AG04450 (cell line): ENCODE measurements at regions of chr1 and their contacts with region 1.

Region 1: DNA sequence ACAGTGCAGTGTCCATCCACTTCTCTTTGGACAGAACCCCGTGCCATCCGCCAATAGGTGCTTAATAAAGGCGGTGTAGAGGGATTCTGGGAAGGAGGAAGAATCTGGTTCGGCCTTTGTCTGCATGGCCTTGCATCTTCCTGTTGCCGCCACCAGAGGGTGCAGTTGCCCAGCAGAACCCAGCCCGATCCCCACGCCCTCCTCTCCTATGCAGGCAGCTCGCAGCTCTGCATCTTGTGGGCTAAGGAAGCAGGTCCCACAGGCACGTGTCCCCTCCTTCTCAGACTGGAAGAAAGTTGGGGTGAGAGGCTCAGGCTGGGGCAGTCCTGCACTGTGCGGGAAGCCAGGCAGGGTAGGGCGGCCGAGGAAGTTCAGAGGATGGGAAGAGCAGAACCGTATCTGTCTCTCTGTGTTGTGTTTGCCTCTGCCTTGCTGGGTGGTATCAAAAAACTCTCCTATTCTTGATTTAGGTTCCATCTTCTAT is 20.8 kb downstream of the NAV1 start:
- DNase-seq: peak; percentile 74
- H3K4me3 ChIP-seq: no peak overlapping the region
- H3K27ac ChIP-seq: no peak overlapping the region
- H3K27me3 ChIP-seq: no peaks in the 10 kb centered on the region
- CTCF ChIP-seq: peak; percentile 96

Region 2: DNA sequence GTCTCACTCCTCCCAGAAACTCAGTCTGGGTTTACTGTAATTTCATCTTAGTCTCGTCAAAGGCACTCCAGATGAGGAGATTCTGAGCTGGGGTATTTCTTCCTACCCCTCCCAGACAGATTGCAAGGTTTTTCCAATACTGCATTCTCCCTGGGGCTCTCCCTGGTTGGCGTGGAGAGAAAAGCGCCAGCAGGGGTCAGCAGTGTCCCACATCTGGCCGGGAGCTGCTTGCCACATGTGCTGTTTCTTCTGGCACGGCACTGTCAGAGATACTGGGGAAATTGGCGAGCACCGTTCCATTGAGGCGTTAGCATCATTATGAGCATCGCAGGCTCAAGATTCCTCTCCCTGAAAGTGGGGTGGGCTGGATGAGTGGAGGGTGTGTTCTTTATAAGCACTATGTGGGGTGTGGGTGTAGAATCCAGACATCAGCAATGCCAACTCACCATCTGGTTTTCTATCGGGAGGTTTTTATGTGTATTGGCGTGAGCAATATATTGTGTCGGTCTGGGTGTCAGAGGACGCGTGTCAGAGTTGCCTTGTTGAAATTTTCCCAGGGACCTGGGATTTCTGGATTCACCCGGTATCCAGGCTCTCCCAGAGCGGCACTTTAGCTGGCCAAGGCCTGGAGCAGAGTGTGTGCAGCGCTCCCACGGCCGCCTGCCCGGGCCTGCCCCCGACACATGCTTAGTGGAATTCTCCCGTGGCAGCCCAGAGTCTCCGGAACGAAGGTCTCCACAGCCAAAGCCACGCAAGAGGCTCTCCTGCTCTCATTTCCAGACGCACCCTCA is 28.8 kb before region 1 on chr1:
- CTCF ChIA-PET with region 1: interaction called, 14 read pairs
- POLR2A ChIA-PET with region 1: no interaction called
- DNase-seq: no peak
- H3K4me3 ChIP-seq: no peak overlapping the region
- H3K27ac ChIP-seq: peak overlapping the region; percentile 31
- H3K27me3 ChIP-seq: no peaks in the 10 kb centered on the region
- CTCF ChIP-seq: peak; percentile 92

Region 3: DNA sequence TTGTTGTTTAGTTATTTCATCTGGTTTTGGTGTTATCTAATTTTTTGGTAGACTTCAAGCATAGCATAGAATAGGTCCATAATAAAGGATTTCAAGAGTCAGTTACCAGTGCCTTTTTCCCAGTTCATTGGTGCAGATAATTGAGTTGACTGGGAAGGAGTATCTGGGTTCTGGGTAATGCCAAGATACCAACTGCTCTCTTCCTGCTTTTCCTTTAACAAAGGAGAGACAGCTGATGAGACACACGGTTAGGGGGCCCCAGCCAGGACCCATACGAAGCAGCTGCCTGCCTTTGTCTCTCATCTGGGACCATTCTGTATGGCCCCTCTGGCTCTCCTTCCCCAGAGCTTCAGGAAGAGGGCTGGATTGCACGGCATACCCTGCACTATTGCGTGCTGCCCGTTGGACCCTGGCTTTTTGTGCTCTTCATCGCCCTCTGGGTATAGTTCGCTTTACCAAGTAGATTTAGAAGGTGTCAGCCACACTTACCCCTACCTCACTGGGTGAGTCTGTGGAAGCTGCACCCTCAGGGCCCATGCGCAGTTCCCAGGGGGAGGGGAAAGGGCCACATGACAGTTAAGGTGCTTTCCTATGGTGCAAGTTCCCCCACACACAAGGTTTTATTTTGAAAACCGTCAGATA is 13.7 kb before region 1 on chr1:
- CTCF ChIA-PET with region 1: interaction called, 22 read pairs
- POLR2A ChIA-PET with region 1: no interaction called
- DNase-seq: no peak
- H3K4me3 ChIP-seq: no peak overlapping the region
- H3K27ac ChIP-seq: no peak overlapping the region
- H3K27me3 ChIP-seq: no peaks in the 10 kb centered on the region
- CTCF ChIP-seq: peak; percentile 14; the same call in 1 of the 2 replicates

Region 4: GRCh38 chr1:201582705-201583442 is 23.2 kb after region 1 on chr1:
- CTCF ChIA-PET with region 1: interaction called, 7 read pairs
- POLR2A ChIA-PET with region 1: interaction called, 19 read pairs
- DNase-seq: no peak
- H3K4me3 ChIP-seq: no peak overlapping the region
- H3K27ac ChIP-seq: peak overlapping the region; percentile 70
- H3K27me3 ChIP-seq: no peaks in the 10 kb centered on the region
- CTCF ChIP-seq: no peak

Region 5: DNA sequence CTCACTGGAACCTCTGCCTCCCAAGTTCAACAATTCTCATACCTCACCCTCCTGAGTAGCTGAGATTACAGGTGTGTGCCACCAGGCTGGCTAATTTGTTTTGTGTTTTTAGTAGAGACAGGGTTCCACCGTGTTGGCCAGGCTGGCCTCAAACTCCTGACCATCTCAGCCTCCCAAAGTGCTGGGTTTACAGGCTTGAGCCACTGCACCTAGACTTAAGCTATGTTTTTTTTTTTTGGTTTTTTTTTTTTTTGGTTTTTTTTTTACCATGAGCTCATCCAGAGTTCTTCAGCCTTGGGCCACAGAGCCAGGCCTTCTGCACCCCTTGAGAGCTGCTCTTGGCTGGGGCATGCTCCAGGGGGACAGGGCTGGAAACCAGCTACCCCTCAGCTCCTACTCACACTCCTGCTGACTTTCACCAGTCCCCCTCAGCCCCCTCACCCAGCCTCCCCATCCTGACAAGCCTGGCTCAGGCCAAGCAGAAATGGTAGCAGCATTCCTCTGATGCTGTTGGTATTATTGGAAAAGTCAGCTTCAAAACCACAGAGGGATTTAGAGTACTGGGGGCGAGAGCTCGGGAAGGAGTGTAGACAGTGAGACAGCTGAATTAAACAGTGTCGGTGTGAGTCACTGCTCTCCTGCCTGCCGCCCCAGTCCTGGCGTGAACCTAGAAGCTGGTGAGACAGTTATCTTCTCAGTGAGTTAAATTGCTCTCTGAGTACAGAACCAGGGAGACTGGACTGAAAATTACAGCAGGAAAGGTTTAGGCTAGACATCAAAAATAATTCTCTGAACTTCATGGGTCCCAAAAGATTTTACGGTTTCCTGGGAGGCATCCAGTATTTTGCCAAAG is 42.9 kb after region 1 on chr1:
- CTCF ChIA-PET with region 1: interaction called, 7 read pairs
- POLR2A ChIA-PET with region 1: interaction called, 18 read pairs
- DNase-seq: peak; percentile 78
- H3K4me3 ChIP-seq: no peak overlapping the region
- H3K27ac ChIP-seq: peak overlapping the region; percentile 80
- H3K27me3 ChIP-seq: no peaks in the 10 kb centered on the region
- CTCF ChIP-seq: no peak

Region 6: GRCh38 chr1:201649761-201650622 is 90.3 kb after region 1 on chr1:
- CTCF ChIA-PET with region 1: interaction called, 9 read pairs
- POLR2A ChIA-PET with region 1: interaction called, 14 read pairs
- DNase-seq: no peak
- H3K4me3 ChIP-seq: peak overlapping the region; percentile 91
- H3K27ac ChIP-seq: peak overlapping the region; percentile 73
- H3K27me3 ChIP-seq: no peaks in the 10 kb centered on the region
- CTCF ChIP-seq: peak; percentile 21; the same call in 1 of the 2 replicates